ENCODE measurements at regions of chr9 and their contacts with region 1.

Region 1: DNA sequence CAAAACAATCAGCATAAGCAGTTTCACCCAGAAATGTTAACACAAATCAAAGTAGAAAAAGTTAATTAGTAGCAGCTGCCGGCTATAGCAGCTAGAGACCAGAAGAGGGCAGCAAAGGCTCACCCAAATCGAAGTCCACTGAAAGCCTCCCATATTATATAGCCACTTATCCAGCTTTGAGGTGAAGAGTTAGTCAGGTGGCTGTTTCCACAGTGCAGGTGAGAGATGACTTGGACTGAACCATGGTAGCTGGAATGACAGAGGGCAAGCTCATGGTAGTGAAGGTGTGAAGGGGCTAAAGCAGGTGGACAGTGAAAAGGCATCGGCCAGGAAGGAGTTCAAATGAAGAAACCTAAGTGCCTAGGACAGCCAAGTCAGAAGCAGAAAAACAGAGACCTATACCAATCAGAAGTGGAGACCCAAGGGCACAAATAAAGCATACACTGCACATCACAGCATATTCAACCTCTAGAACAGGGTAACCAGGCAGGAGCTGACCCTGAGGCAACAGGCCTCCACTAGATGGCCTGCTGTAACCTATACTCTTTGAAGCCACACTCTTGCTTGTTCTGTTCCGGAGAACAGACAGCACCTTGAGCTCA is 7.2 kb upstream of the RNF38 start:
- DNase-seq: peak; percentile 67 to 69
- H3K4me3 ChIP-seq: no peak overlapping the region
- H3K4me3 Mint-ChIP-seq: peak overlapping the region; percentile 9
- H3K27ac Mint-ChIP-seq: peak overlapping the region; percentile 69
- H3K4me1 ChIP-seq: peaks cover 10% of the 10 kb centered on the region; the same call in 1 of the 2 replicates
- H3K4me1 Mint-ChIP-seq: peaks cover 18% of the 10 kb centered on the region
- H3K27me3 ChIP-seq: no peaks in the 10 kb centered on the region
- H3K27me3 Mint-ChIP-seq: no peaks in the 10 kb centered on the region
- CTCF ChIP-seq: peak; percentile 84 to 89

Region 2: DNA sequence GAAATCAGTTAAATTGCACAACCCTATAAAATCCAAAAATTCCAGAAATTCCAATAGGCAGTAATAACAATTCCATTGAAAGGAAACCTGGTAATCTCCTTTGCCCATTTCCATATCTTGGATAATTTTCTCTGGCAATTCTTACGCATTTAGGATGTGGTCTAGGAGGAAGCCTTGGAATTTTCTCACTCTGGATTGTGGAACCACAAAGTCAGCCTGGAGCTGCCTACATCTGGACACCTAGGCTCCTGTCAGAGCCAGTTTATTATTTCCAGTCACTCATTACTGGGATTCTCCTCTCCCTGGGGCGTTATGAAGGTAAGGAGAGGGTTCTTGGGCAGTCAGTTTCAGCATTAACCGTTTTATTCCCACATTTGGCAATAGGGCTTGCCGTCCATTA is 108.6 kb before region 1 on chr9:
- CTCF ChIA-PET with region 1: no interaction called
- POLR2A ChIA-PET with region 1: no interaction called
- intact Hi-C with region 1: no loop called
- DNase-seq: no peak
- H3K4me3 ChIP-seq: no peak overlapping the region
- H3K4me3 Mint-ChIP-seq: no peak overlapping the region
- H3K27ac Mint-ChIP-seq: no peak overlapping the region
- H3K4me1 ChIP-seq: peaks cover 13% of the 10 kb centered on the region
- H3K4me1 Mint-ChIP-seq: peaks cover 8% of the 10 kb centered on the region
- H3K27me3 ChIP-seq: no peaks in the 10 kb centered on the region
- H3K27me3 Mint-ChIP-seq: no peaks in the 10 kb centered on the region
- CTCF ChIP-seq: no peak

Region 3: DNA sequence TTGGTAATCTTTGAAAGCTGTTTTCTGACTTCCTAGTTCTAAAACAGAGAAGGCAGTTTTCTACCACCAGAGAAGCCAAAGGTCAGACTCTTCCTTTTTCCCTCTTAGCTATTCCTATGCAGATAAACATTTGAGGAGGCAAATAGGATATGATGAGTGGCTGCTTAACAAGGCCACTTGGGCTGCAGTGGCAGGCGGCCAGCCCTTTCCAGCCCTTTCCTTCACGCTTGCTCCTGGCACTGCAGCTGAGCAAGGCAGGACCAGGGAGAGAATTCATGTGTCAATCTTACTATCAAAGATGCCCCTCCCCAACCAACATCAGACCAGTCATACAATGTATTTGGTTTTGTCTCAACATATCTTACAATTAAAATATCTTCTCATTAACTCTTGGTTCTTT is 29.7 kb after region 1 on chr9:
- CTCF ChIA-PET with region 1: interaction called, 21 read pairs
- POLR2A ChIA-PET with region 1: no interaction called
- intact Hi-C with region 1: no loop called
- DNase-seq: no peak
- H3K4me3 ChIP-seq: no peak overlapping the region
- H3K4me3 Mint-ChIP-seq: no peak overlapping the region
- H3K27ac Mint-ChIP-seq: no peak overlapping the region
- H3K4me1 ChIP-seq: peaks cover 12% of the 10 kb centered on the region
- H3K4me1 Mint-ChIP-seq: peaks cover 15% of the 10 kb centered on the region
- H3K27me3 ChIP-seq: no peaks in the 10 kb centered on the region
- H3K27me3 Mint-ChIP-seq: no peaks in the 10 kb centered on the region
- CTCF ChIP-seq: no peak

Region 4: GRCh38 chr9:36450110-36450732 is 43.0 kb after region 1 on chr9:
- CTCF ChIA-PET with region 1: interaction called, 98 read pairs
- POLR2A ChIA-PET with region 1: no interaction called
- intact Hi-C with region 1: loop called (anchors 1 kb)
- DNase-seq: peak; percentile 37 to 47
- H3K4me3 ChIP-seq: no peak overlapping the region
- H3K4me3 Mint-ChIP-seq: no peak overlapping the region
- H3K27ac Mint-ChIP-seq: no peak overlapping the region
- H3K4me1 ChIP-seq: no peaks in the 10 kb centered on the region
- H3K4me1 Mint-ChIP-seq: no peaks in the 10 kb centered on the region
- H3K27me3 ChIP-seq: no peaks in the 10 kb centered on the region
- H3K27me3 Mint-ChIP-seq: no peaks in the 10 kb centered on the region
- CTCF ChIP-seq: peak; percentile 63 to 77

Region 5: DNA sequence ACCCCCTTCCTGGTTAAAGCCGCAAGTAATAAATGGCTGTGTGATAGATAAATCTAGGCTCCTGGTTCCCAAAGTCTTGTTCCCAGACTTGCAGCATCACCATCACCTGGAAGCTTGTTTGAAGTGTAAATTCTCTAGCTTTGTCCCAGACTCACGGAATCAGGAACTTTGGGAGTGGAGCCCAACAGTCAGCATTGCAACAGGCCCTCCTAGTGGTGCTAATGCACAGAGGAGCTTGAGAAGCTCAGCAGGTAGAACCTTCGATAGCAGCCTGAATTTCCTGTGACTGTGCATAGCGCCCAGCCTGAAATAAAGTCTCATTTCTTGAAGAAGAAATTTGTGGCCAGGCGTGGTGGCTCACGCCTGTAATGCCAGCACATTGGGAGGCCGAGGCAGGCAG is 135.1 kb after region 1 on chr9:
- CTCF ChIA-PET with region 1: interaction called, 10 read pairs
- POLR2A ChIA-PET with region 1: no interaction called
- intact Hi-C with region 1: no loop called
- DNase-seq: no peak
- H3K4me3 ChIP-seq: no peak overlapping the region
- H3K4me3 Mint-ChIP-seq: no peak overlapping the region
- H3K27ac Mint-ChIP-seq: no peak overlapping the region
- H3K4me1 ChIP-seq: no peaks in the 10 kb centered on the region
- H3K4me1 Mint-ChIP-seq: no peaks in the 10 kb centered on the region
- H3K27me3 ChIP-seq: no peaks in the 10 kb centered on the region
- H3K27me3 Mint-ChIP-seq: no peaks in the 10 kb centered on the region
- CTCF ChIP-seq: no peak

Region 6: GRCh38 chr9:36551129-36551528 is 143.9 kb after region 1 on chr9:
- CTCF ChIA-PET with region 1: interaction called, 24 read pairs
- POLR2A ChIA-PET with region 1: interaction called, 4 read pairs
- intact Hi-C with region 1: loop called (anchors 1 kb)
- DNase-seq: no peak
- H3K4me3 ChIP-seq: no peak overlapping the region
- H3K4me3 Mint-ChIP-seq: no peak overlapping the region
- H3K27ac Mint-ChIP-seq: no peak overlapping the region
- H3K4me1 ChIP-seq: no peaks in the 10 kb centered on the region
- H3K4me1 Mint-ChIP-seq: no peaks in the 10 kb centered on the region
- H3K27me3 ChIP-seq: no peaks in the 10 kb centered on the region
- H3K27me3 Mint-ChIP-seq: no peaks in the 10 kb centered on the region
- CTCF ChIP-seq: no peak

Region 7: GRCh38 chr9:36560857-36561221 is 153.6 kb after region 1 on chr9:
- CTCF ChIA-PET with region 1: interaction called, 24 read pairs
- POLR2A ChIA-PET with region 1: no interaction called
- intact Hi-C with region 1: no loop called
- DNase-seq: peak; percentile 46 to 53
- H3K4me3 ChIP-seq: no peak overlapping the region
- H3K4me3 Mint-ChIP-seq: peak overlapping the region; percentile 19
- H3K27ac Mint-ChIP-seq: peak overlapping the region; percentile 69
- H3K4me1 ChIP-seq: peaks cover 23% of the 10 kb centered on the region
- H3K4me1 Mint-ChIP-seq: peaks cover 11% of the 10 kb centered on the region
- H3K27me3 ChIP-seq: no peaks in the 10 kb centered on the region
- H3K27me3 Mint-ChIP-seq: no peaks in the 10 kb centered on the region
- CTCF ChIP-seq: no peak

Region 8: DNA sequence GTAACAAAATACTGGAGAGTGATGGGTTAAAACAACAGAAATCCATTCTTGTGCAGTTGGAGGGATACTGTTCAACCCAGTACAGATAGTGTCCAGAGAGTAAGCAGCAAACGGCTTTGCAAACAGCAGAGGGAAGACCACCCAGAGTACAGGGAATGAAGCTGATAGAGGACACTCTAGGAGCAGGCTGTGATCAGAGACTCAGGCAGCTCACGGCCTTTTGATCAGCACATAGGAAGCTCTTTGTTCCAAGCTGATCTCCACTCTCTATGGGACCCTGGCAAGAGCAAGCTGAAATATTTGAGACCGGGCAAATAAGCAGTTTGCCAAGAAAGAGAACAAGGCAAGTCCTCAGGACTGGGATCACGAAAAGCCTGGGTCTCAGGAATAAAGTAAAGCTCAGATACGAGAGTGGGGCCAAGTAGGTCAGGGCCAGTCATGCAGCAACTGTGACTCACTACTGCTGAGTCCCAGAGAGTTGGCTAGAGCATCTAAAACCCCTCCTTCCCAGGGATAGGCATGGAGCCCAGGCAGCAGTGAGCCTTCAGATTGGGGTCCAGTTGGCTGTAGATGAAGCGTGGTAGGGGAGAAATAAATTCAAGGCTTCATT is 217.9 kb after region 1 on chr9:
- CTCF ChIA-PET with region 1: no interaction called
- POLR2A ChIA-PET with region 1: no interaction called
- intact Hi-C with region 1: no loop called
- DNase-seq: no peak
- H3K4me3 ChIP-seq: no peak overlapping the region
- H3K4me3 Mint-ChIP-seq: no peak overlapping the region
- H3K27ac Mint-ChIP-seq: no peak overlapping the region
- H3K4me1 ChIP-seq: no peaks in the 10 kb centered on the region
- H3K4me1 Mint-ChIP-seq: peaks cover 7% of the 10 kb centered on the region
- H3K27me3 ChIP-seq: no peaks in the 10 kb centered on the region
- H3K27me3 Mint-ChIP-seq: no peaks in the 10 kb centered on the region
- CTCF ChIP-seq: no peak

Region 9: DNA sequence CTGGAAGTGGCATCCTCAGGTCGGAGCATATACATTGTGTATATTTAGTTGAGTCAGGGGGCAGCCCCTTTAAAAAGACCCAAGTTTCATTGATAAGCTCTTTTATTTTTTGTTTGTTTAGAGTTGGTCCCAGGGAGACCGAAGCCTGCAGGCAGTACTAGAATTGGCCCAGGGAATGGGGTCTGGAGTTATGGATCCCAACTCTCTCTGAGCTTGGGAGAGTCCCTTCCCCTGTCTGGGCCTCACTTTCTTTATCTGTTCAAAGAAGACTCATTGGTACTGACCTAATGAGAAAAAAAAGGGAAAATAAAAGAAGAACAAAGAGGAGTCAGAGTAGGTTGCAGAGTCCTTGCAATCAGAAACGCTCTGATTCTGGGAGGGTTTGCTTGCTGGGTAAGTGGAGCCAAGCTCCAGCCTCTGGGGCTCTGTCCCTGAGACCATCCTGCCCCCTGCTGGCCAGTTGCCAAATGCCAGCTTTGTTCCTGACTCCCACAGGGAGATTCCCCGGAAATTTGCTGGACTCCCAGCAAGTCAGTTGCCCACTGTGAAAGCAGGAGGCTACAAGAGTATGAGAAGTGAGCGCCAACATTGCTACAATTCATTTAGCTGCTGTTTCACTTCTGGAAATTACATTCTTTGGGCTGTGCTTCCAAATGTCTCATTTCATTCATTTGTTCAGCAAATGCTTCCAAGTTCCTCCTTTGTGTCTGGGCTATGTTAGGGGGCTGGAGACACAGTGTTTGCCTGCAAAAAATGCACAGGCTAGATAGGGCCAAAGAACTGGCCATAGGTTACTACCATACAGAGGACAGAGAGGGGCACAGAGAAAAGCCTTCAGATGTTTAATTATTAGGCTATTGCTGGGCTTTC is 321.7 kb after region 1 on chr9:
- CTCF ChIA-PET with region 1: interaction called, 18 read pairs
- POLR2A ChIA-PET with region 1: no interaction called
- intact Hi-C with region 1: loop called (anchors 2 kb)
- DNase-seq: peak; percentile 78 to 88
- H3K4me3 ChIP-seq: no peak overlapping the region
- H3K4me3 Mint-ChIP-seq: no peak overlapping the region
- H3K27ac Mint-ChIP-seq: no peak overlapping the region
- H3K4me1 ChIP-seq: no peaks in the 10 kb centered on the region
- H3K4me1 Mint-ChIP-seq: no peaks in the 10 kb centered on the region
- H3K27me3 ChIP-seq: no peaks in the 10 kb centered on the region
- H3K27me3 Mint-ChIP-seq: no peaks in the 10 kb centered on the region
- CTCF ChIP-seq: peak; percentile 91 to 92